Mammary epithelial cell (primary cell): ENCODE measurements at regions of chr16 and their contacts with region 1.

Region 1: GRCh38 chr16:48156790-48157209 is 1.0 kb upstream of the ABCC12 start:
- DNase-seq: peak; percentile 66
- H3K4me3 ChIP-seq: no peak overlapping the region
- H3K27ac ChIP-seq: no peak overlapping the region
- H3K4me1 ChIP-seq: peaks cover 19% of the 10 kb centered on the region
- H3K27me3 ChIP-seq: no peaks in the 10 kb centered on the region
- CTCF ChIP-seq: peak; percentile 87 to 92

Region 2: DNA sequence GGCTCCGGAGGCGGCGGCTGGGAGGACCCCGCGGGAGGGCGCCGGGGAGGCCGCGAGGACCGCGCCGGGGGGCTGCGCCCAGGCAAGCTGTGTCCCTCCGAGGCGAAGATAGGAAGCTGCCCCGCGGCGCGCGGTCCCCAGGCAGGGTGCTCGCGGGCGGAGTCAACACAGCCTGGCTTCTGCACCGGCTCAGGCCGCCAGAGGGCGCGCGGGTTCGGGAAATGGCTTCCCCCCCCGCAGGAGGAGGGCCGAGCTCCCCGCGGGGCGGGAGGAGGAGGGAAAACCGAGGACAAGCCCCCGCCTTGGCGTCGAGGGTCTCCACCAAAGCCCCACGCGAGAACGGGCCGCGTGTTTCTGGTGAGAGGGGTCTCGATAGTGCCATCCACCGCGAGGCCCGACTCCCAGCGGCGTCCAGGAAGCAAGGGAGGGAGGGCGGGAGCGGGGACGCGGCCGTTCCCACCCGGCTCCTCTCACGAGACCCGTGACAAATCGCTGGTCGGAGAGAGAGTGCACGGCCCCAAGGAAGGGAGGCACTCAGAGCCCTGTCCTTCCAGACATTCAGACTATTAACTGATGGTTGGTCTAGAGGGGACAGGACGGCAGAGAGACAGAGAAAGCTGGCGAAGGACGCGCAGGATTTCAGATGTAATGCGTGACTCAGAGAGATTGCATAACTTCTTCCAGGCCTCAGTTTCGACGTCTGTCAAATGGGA is 1118.9 kb before region 1 on chr16:
- CTCF ChIA-PET with region 1: interaction called, 3 read pairs
- dilution Hi-C with region 1: no loop called
- in situ Hi-C with region 1: loop called (anchors 10 kb)
- intact Hi-C with region 1: loop called (anchors 2 kb)
- DNase-seq: peak; percentile 68
- H3K4me3 ChIP-seq: peak overlapping the region; percentile 63 to 80 (median 70)
- H3K27ac ChIP-seq: peak overlapping the region; percentile 26
- H3K4me1 ChIP-seq: peaks cover 4% of the 10 kb centered on the region
- H3K27me3 ChIP-seq: no peaks in the 10 kb centered on the region
- CTCF ChIP-seq: peak; percentile 76 to 94

Region 3: GRCh38 chr16:47258874-47259461 is 897.8 kb before region 1 on chr16:
- CTCF ChIA-PET with region 1: no interaction called
- dilution Hi-C with region 1: no loop called
- in situ Hi-C with region 1: no loop called
- intact Hi-C with region 1: loop called (anchors 2 kb)
- DNase-seq: peak; percentile 3
- H3K4me3 ChIP-seq: no peak overlapping the region
- H3K27ac ChIP-seq: no peak overlapping the region
- H3K4me1 ChIP-seq: no peaks in the 10 kb centered on the region
- H3K27me3 ChIP-seq: no peaks in the 10 kb centered on the region
- CTCF ChIP-seq: peak; percentile 68 to 79

Region 4: GRCh38 chr16:47395733-47396498 is 760.9 kb before region 1 on chr16:
- CTCF ChIA-PET with region 1: no interaction called
- dilution Hi-C with region 1: no loop called
- in situ Hi-C with region 1: no loop called
- intact Hi-C with region 1: no loop called
- DNase-seq: no peak
- H3K4me3 ChIP-seq: no peak overlapping the region
- H3K27ac ChIP-seq: no peak overlapping the region
- H3K4me1 ChIP-seq: peaks cover 7% of the 10 kb centered on the region
- H3K27me3 ChIP-seq: no peaks in the 10 kb centered on the region
- CTCF ChIP-seq: no peak

Region 5: GRCh38 chr16:47939690-47940089 is 217.1 kb before region 1 on chr16:
- CTCF ChIA-PET with region 1: no interaction called
- dilution Hi-C with region 1: no loop called
- in situ Hi-C with region 1: no loop called
- intact Hi-C with region 1: loop called (anchors 1 kb)
- DNase-seq: peak; percentile 41
- H3K4me3 ChIP-seq: no peak overlapping the region
- H3K27ac ChIP-seq: no peak overlapping the region
- H3K4me1 ChIP-seq: no peaks in the 10 kb centered on the region
- H3K27me3 ChIP-seq: no peaks in the 10 kb centered on the region
- CTCF ChIP-seq: peak in 1 of 2 donors; percentile 38

Region 6: DNA sequence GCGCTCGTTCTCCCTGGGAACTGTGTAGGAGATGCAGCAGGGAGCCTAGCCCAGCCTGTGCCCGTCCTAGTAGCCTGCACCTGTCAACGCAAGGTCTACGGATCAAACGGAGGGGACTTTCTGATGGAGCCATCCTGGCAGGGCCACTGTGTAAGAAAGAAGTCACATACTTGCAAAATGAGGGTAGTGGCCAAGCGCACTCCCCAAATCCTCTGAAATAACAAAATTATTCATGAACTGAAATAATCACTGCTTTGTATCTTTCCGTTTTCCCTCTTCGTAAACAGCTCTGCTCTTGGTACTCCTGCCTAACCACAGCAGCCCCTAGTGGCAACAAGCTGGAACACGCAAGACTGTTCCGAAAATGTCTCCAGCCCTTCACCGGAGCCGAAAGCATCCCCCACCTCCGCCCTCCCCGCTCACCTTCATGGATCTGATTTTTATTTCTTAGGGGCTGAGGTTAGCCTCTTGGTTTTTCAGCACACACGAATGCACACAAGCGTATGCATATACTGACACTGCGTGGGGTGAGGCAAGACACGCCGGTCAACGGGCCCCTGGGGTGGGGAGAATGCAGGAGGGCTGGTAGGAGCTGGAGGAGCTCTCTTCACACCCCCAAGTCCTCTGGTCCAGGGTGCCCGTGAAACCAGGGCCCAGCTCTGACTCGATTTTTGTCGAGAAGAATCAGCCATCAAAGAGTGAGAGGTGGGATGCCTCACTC is 101.8 kb before region 1 on chr16:
- CTCF ChIA-PET with region 1: no interaction called
- dilution Hi-C with region 1: no loop called
- in situ Hi-C with region 1: no loop called
- intact Hi-C with region 1: loop called (anchors 2 kb)
- DNase-seq: peak; percentile 41
- H3K4me3 ChIP-seq: no peak overlapping the region
- H3K27ac ChIP-seq: no peak overlapping the region
- H3K4me1 ChIP-seq: peaks cover 13% of the 10 kb centered on the region
- H3K27me3 ChIP-seq: no peaks in the 10 kb centered on the region
- CTCF ChIP-seq: peak; percentile 96 to 98

Region 7: DNA sequence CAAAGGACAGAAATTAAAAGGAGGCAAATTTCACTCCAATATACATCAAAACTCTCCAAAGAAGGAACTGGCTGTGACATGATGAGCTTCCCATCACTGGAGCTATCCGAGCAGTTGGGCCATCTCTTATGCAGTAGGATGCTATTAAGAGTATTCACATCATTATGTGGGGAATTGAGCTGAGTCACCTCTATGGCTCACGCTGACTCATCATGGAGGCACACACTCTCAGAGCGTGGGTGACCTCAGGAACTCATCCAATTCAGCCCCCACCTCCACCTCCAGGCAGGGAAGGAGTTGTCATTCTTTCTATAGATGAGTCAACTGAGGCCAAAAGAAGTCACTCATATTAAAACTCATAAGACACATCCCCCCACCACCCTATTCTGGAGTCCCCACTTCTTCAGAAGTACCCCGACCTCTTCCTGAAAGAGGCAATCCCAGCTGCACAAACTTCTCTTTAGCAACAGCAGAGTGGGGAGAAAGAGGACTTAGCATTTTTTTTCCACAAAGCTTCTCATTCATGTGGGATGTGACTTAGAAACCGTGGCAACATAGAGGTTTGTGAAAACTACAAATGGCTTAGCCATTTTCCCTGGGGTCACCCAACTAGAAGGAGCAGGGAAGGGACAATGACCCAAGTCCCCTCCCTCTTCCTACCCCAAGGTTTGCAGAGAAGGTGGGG is 33.6 kb before region 1 on chr16:
- CTCF ChIA-PET with region 1: no interaction called
- dilution Hi-C with region 1: no loop called
- in situ Hi-C with region 1: no loop called
- intact Hi-C with region 1: loop called (anchors 5 kb)
- DNase-seq: peak; percentile 99
- H3K4me3 ChIP-seq: no peak overlapping the region
- H3K27ac ChIP-seq: peak overlapping the region; percentile 23
- H3K4me1 ChIP-seq: peaks cover 33% of the 10 kb centered on the region
- H3K27me3 ChIP-seq: no peaks in the 10 kb centered on the region
- CTCF ChIP-seq: no peak